ENCODE measurements at regions of chr2 and their contacts with region 1.

Region 1: DNA sequence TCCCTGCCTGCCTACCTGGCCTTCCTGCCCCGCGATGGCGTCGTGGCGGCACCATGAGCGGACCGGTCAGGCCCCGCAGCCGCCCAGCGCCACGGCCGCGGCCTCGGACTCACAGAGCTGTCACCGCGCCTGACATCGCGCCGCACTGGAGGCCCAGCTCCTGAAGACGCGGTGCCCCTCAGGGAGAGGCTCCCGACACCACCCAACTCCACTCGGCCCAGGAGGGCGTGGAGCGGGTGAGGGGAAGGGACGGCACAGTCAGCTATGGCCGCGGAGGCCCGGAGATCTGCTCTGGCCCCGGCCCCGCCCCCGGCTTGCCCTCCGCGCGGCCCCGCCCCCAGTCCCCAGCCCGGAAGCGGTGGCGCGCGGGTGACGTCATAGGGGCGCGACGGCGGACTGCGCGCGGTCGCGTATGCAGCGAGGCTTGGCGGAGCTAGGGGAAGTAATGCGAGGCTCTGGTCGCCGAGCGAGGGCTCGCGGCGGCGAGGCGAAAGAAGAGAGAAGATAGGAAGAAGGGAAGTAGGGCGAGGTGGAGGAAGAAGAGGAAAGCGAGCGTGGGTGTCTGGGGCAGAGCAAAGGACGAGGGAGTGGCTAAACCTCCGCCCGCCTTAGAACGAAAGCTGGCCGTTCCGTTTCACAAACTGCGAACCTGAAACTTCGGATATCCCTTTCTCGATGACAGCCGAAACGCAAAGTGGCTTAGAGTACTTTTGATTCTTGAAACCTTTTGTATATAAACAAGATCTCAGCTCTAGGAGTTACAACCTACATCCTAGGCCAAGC is at the start of gene SLC35F5:
- DNase-seq: peak; percentile 95
- H3K4me3 Mint-ChIP-seq: peak within 1 kb of the TSS; percentile 89
- H3K27ac Mint-ChIP-seq: peak within 1 kb of the TSS; percentile 98
- H3K4me1 Mint-ChIP-seq: peaks cover 20% of the 10 kb centered on the region
- H3K27me3 Mint-ChIP-seq: no peaks in the 10 kb centered on the region
- total RNA-seq, gene SLC35F5: 21.7 to 24.3 TPM

Region 2: DNA sequence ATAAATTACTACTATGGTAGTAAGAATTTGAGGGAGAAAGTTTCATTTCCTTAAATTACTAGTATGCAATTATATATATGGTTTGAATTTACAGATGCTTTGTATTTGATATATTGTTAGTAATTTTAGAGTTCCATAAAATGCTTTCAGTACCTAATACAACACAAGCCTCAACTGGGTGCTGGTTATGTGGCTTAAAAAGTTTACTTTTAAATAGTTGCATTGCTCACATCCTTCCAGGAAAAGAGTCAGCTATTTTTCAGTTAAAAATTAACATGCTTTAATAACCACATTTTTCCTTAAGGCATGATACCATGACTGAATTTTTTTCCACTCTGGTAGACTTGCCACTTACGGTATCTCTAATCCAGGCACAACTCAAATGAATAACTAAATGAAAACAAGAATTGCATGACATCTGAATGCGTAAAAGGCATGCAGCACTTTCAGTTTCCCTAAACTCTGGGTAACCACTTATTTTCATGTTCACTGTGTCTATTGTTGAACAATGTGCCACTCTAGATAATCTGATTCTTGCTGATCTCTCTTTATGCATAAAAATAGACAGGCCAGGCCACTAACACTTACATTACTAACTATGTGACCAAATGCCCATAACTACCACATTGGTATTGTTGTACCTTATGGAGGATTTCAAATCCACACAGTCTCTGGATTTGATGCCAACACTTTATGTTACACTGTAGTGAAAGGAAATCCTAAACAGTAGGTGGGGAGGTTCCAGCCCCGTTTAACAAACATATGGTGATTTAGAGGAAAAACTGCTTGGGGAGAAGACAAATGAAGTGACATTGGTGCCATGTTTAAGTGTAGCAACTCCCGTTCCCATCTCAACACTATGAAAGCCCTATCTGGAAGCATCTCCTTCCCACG is 35.4 kb after region 1 on chr2:
- CTCF ChIA-PET with region 1: interaction called, 7 read pairs
- POLR2A ChIA-PET with region 1: interaction called, 7 read pairs
- intact Hi-C with region 1: loop called (anchors 1 kb)
- DNase-seq: peak; percentile 10
- H3K4me3 Mint-ChIP-seq: peak overlapping the region; percentile 27
- H3K27ac Mint-ChIP-seq: peak overlapping the region; percentile 96
- H3K4me1 Mint-ChIP-seq: peaks cover 32% of the 10 kb centered on the region
- H3K27me3 Mint-ChIP-seq: peaks cover 8% of the 10 kb centered on the region

Region 3: GRCh38 chr2:113876503-113877387 is 120.2 kb after region 1 on chr2:
- CTCF ChIA-PET with region 1: interaction called, 6 read pairs
- POLR2A ChIA-PET with region 1: interaction called, 10 read pairs
- intact Hi-C with region 1: loop called (anchors 1 kb)
- DNase-seq: peak; percentile 93
- H3K4me3 Mint-ChIP-seq: peak overlapping the region; percentile 30
- H3K27ac Mint-ChIP-seq: peak overlapping the region; percentile 84
- H3K4me1 Mint-ChIP-seq: peaks cover 38% of the 10 kb centered on the region
- H3K27me3 Mint-ChIP-seq: no peaks in the 10 kb centered on the region

Region 4: DNA sequence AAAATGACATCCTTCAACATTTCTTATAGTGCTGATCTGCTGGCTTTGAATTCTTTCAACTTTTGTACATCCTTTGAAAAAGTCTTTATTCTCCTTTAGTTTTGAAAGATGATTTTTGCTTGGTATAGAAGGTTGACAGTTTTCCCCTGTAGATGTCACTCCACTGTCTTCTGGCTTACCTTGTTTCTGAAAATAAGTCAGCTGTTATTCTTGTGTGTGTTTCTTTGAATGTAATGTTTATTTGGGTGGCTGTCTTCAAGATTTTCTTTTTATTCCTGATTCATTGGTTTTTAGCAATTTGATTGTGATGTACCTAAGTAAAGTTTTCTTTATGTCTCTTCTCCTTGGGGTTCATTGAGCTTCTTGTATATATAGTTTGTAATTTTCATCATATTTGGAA is 181.0 kb after region 1 on chr2:
- CTCF ChIA-PET with region 1: no interaction called
- POLR2A ChIA-PET with region 1: no interaction called
- intact Hi-C with region 1: no loop called
- DNase-seq: no peak
- H3K4me3 Mint-ChIP-seq: no peak overlapping the region
- H3K27ac Mint-ChIP-seq: peak overlapping the region; percentile 39
- H3K4me1 Mint-ChIP-seq: peaks cover 5% of the 10 kb centered on the region
- H3K27me3 Mint-ChIP-seq: no peaks in the 10 kb centered on the region

Region 5: GRCh38 chr2:113962692-113963480 is 206.3 kb after region 1 on chr2:
- CTCF ChIA-PET with region 1: no interaction called
- POLR2A ChIA-PET with region 1: interaction called, 3 read pairs
- intact Hi-C with region 1: loop called (anchors 5 kb)
- DNase-seq: no peak
- H3K4me3 Mint-ChIP-seq: no peak overlapping the region
- H3K27ac Mint-ChIP-seq: peak overlapping the region; percentile 4
- H3K4me1 Mint-ChIP-seq: peaks cover 16% of the 10 kb centered on the region
- H3K27me3 Mint-ChIP-seq: no peaks in the 10 kb centered on the region